SK-N-SH (cell line): ENCODE measurements at regions of chr12 and their contacts with region 1.

Region 1: GRCh38 chr12:48890657-48891418 is 25.2 kb upstream of the RND1 start:
- DNase-seq: peak; percentile 86
- H3K4me3 ChIP-seq: peak overlapping the region; percentile 39 to 63
- H3K27ac ChIP-seq: no peak overlapping the region
- H3K4me1 ChIP-seq: peaks cover 0 to 2% of the 10 kb centered on the region in 2 experiments; a peak in 1 of 4 replicates
- H3K27me3 ChIP-seq: no peaks in the 10 kb centered on the region; the same call in 1 of the 2 replicates
- CTCF ChIP-seq: peak; percentile 92
- EP300 ChIP-seq: no peak
- RAD21 ChIP-seq: peak; percentile 84

Region 2: DNA sequence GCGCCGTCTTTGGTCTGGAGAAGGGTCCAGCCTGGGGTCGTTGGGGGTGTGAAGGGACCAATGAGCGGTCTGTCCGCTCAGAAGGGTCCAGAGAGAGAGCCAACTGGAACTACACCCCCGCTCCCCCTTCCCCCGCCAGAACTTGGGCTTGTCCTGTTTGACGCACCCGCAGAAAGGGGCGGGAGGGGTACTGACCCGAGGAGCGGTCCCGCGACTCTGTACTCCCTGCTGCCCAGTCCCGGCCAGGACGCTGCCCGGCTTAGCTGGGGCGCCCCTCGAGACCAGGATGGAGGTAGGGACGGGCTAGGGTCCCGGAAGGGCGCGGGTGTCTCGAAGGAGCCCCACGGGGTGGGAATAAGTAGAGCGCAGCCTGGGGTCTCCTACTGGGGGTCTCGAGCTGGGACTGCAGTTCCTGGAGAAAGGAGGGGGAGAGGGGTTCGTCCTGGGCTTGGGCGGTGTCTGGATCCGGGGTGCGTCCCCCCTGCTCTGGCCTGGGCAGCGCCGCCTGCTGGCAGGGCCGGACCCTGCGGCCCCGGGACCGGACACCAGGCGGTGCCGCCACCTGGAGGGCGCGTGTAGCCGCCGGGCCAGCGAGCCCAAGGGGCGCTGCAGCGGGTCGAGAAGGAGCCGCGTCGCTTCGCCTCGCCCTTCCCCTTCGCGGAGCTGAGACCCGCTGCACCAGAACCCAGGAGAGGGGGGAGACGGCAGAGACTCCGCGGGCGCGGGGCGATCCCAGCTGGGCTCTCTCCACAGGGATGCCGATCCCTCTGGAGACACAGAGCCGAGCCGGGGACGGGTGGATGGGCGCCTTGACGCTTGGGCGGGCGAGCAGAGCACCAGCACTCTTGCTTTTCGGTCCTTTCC is 76.3 kb before region 1 on chr12:
- CTCF ChIA-PET with region 1: interaction called, 20 read pairs
- POLR2A ChIA-PET with region 1: no interaction called
- DNase-seq: peak; percentile 96
- H3K4me3 ChIP-seq: peak overlapping the region; percentile 68 to 75
- H3K27ac ChIP-seq: peak overlapping the region; percentile 80 to 87
- H3K4me1 ChIP-seq: peaks cover 22 to 37% of the 10 kb centered on the region in 2 experiments; a peak in 3 of 4 replicates
- H3K27me3 ChIP-seq: no peaks in the 10 kb centered on the region
- CTCF ChIP-seq: peak; percentile 92
- EP300 ChIP-seq: no peak
- RAD21 ChIP-seq: peak; percentile 18; the same call in 1 of the 2 replicates

Region 3: GRCh38 chr12:48832321-48833060 is 58.3 kb before region 1 on chr12:
- CTCF ChIA-PET with region 1: interaction called, 16 read pairs
- POLR2A ChIA-PET with region 1: interaction called, 5 read pairs
- DNase-seq: no peak
- H3K4me3 ChIP-seq: no peak overlapping the region
- H3K27ac ChIP-seq: no peak overlapping the region
- H3K4me1 ChIP-seq: no peaks in the 10 kb centered on the region
- H3K27me3 ChIP-seq: no peaks in the 10 kb centered on the region
- CTCF ChIP-seq: no peak
- EP300 ChIP-seq: no peak
- RAD21 ChIP-seq: no peak

Region 4: DNA sequence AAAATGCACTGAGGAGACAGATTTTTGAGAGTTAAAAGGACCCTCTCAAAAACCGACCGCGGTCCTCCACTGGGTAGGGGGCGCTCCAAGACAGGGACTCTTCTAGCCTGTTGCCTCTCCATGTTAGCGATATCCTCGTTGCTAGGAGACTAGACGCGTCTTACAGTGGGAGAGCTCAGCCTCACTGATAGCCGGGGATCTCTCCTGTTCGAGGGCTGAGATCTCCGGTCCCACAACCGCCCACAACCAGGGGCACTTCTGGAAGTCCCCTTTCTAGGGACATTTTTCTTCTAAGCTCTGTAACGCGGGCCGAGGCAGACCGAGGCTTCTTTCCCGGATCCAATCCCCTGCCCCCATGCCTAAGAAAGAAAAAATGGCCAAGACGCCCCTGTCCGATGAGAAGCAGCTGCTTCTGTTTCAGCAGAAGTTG is 13.2 kb after region 1 on chr12:
- CTCF ChIA-PET with region 1: interaction called, 99 read pairs
- POLR2A ChIA-PET with region 1: interaction called, 3 read pairs
- DNase-seq: peak; percentile 85
- H3K4me3 ChIP-seq: peak overlapping the region; percentile 53 to 84
- H3K27ac ChIP-seq: no peak overlapping the region
- H3K4me1 ChIP-seq: peaks cover 0 to 5% of the 10 kb centered on the region in 2 experiments; a peak in 1 of 4 replicates
- H3K27me3 ChIP-seq: no peaks in the 10 kb centered on the region
- CTCF ChIP-seq: peak; percentile 68
- EP300 ChIP-seq: no peak
- RAD21 ChIP-seq: peak; percentile 23; the same call in 1 of the 2 replicates

Region 5: GRCh38 chr12:48936379-48936979 is 45.6 kb after region 1 on chr12:
- CTCF ChIA-PET with region 1: interaction called, 31 read pairs
- POLR2A ChIA-PET with region 1: no interaction called
- DNase-seq: peak; percentile 88
- H3K4me3 ChIP-seq: peak overlapping the region in 1 of 2 experiments; percentile 31; a peak in 1 of 4 replicates
- H3K27ac ChIP-seq: no peak overlapping the region
- H3K4me1 ChIP-seq: no peaks in the 10 kb centered on the region
- H3K27me3 ChIP-seq: no peaks in the 10 kb centered on the region
- CTCF ChIP-seq: peak; percentile 94
- EP300 ChIP-seq: no peak
- RAD21 ChIP-seq: peak; percentile 73

Region 6: DNA sequence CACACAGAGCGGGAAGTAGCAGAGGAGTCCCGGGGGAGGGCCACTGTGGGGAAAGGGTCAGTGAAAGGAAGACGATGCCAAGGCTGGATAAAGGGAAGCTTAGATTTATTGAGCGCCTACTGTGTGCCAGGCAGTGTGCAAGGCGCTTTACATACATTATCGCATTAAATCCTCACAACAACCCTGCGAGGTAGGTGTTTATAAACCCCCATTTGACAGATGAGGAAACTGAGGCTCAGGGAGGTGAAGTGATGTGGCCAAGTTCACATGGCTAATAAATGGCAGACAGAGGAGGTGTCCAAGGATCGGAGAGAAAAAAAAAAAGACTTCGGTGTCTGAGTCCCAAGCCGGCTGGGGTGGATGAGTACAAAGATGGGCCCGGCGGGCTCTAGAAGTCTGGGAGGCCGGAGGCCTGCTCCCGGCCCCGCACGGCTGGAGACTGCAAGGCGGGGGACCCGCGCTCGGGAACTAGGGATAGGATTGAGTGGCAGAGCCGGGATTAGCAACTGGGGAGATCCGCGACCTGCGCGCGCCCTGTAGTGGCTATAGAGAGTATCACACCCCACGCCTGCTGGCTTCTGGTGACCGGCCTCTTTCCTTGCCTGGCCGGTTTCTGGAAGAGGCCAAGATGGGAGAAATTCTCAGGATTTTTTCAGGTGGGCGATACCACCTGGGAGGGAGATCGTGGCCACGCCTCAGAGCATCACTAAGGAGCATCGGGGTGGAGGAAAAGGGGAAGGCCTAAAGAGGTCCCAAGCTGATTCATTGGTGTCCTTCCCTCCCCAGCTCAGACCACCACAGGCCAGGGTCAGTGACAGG is 104.4 kb after region 1 on chr12:
- CTCF ChIA-PET with region 1: interaction called, 17 read pairs
- POLR2A ChIA-PET with region 1: no interaction called
- DNase-seq: peak; percentile 98
- H3K4me3 ChIP-seq: peak overlapping the region; percentile 1 to 41; a peak in 1 of 4 replicates
- H3K27ac ChIP-seq: no peak overlapping the region
- H3K4me1 ChIP-seq: peaks cover 9 to 17% of the 10 kb centered on the region in 2 experiments; a peak in 3 of 4 replicates
- H3K27me3 ChIP-seq: no peaks in the 10 kb centered on the region; the same call in 1 of the 2 replicates
- CTCF ChIP-seq: peak; percentile 70
- EP300 ChIP-seq: no peak
- RAD21 ChIP-seq: peak; percentile 86